ENCODE measurements at regions of chr2 and their contacts with region 1.

Region 1: DNA sequence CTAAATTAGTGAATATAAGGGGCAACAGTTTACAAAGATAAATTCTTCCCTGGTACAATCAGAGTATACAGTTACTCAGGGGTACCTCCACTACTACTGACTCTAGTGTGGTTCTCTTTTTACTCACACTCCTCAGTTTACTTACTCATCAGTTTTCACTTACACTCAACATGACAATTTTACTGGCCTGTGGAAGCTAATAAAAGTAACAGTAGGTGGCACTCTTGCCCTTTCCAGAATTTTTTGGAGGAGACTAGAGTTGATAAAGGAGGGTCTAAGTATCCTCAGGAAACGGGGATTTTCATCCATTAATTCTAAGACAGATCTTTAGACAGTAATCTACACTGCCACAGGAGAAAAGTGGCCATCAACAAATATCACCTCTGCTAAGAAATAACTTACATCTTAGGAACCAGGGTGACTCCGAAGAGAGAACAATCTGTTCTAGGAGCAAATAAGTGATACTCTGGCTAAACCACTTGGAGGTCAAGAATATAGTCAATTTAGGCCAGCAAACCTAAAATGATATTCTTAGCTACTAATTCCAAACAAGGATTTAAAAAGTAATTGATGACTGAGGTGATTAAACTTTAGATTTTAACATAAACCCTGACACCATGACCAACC is 61.3 kb downstream of the ATL2 start:
- DNase-seq: no peak
- ATAC-seq: peak; percentile 60
- H3K4me3 ChIP-seq: no peak overlapping the region
- H3K27ac ChIP-seq: no peak overlapping the region
- H3K4me1 ChIP-seq: no peaks in the 10 kb centered on the region
- H3K27me3 ChIP-seq: no peaks in the 10 kb centered on the region

Region 2: DNA sequence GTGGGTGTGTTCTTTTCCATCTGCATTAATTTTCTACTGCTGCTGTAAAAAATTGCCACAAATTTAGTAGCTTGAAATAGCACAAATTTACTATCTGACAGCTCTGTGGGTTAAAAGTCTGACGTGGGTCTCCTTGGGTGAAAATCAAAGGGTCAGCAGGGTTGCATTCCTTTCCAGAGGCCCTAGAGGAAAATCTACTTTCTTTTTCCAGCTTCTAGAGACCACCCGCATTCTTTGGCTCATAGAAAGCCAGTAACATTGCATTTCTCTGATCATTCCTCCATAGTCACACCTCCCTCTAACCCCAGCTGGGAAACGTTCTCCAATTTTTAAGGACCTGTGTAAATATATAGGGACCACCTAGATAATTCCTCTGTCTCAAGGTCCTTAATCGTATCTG is 67.6 kb before region 1 on chr2:
- intact Hi-C with region 1: no loop called
- DNase-seq: no peak
- ATAC-seq: no peak
- H3K4me3 ChIP-seq: no peak overlapping the region
- H3K27ac ChIP-seq: no peak overlapping the region
- H3K4me1 ChIP-seq: no peaks in the 10 kb centered on the region
- H3K27me3 ChIP-seq: no peaks in the 10 kb centered on the region

Region 3: DNA sequence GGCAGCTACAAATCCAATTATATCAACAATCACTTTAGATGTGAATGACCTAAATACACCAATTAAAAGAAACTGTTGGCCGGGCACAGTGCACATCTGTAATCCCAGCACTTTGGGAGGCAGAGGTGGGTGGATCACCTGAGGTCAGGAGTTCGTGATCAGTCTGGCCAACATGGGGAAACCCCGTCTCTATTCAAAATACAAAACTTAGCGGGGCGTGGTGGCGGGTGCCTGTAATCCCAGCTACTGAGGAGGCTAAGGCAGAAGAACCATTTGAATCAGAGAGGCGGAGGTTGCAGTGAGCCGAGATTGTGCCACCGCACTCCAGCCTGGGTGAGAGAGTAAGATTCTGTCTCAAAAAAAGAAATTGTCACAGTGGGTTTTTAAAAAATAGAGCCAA is 11.8 kb after region 1 on chr2:
- intact Hi-C with region 1: no loop called
- DNase-seq: no peak
- ATAC-seq: no peak
- H3K4me3 ChIP-seq: no peak overlapping the region
- H3K27ac ChIP-seq: no peak overlapping the region
- H3K4me1 ChIP-seq: peaks cover 0 to 1% of the 10 kb centered on the region in 2 donors
- H3K27me3 ChIP-seq: no peaks in the 10 kb centered on the region

Region 4: DNA sequence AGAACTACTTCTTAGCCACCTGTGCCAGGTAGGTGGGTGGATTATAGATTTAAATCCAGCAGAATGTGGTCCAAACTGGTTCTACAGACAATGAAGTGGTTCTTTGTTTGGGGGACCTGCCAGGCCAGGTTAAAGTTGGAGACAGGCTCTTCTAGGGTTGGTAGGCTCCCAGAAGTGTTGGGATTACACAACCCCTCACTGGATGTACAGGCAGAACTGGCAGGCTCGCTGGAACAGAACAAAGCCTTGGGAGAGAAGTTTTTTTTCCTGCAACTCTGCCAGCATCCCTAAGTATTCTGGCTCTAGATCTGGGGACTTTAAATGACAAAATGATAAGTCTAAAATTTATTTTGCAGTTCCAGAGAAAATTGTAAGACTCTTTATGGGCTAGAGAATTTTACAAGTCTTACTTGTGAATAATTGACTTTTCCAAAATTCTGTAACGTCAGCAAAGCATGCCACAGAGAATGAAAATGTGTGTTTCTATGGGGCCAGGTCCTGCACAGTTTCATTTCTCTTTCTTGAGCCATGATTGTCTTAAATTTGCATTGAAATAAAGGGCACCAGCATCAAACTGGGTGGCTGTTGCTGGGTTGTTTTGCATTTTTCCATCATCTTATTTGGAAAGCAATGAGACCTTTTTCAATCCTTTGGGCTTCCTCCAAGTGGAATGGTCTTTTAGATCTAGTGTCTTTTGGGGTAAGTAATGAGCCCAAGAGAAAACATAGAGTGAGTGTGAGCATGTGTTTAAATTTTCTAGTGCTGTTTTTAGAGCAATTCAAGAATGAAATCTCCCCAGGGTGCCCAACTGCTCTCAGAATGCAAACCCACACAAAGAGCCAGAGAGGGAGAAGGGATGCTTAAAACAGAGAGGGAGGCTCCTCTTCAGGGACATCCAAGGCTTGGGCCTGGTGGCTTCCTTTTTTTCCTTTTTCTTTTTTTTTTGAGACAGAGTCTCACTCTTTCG is 93.6 kb after region 1 on chr2:
- intact Hi-C with region 1: no loop called
- DNase-seq: no peak
- ATAC-seq: peak; percentile 81
- H3K4me3 ChIP-seq: no peak overlapping the region
- H3K27ac ChIP-seq: no peak overlapping the region
- H3K4me1 ChIP-seq: peaks cover 0 to 3% of the 10 kb centered on the region in 2 donors
- H3K27me3 ChIP-seq: no peaks in the 10 kb centered on the region

Region 5: GRCh38 chr2:38535744-38536506 is 220.1 kb after region 1 on chr2:
- intact Hi-C with region 1: loop called (anchors 2 to 10 kb)
- DNase-seq: peak; percentile 90 to 96
- ATAC-seq: peak; percentile 95
- H3K4me3 ChIP-seq: peak overlapping the region in 1 of 2 donors; percentile 17
- H3K27ac ChIP-seq: no peak overlapping the region
- H3K4me1 ChIP-seq: no peaks in the 10 kb centered on the region
- H3K27me3 ChIP-seq: no peaks in the 10 kb centered on the region

Region 6: GRCh38 chr2:38572167-38572566 is 256.3 kb after region 1 on chr2:
- intact Hi-C with region 1: loop called in 1 of 2 experiments (anchors 10 kb)
- DNase-seq: no peak
- ATAC-seq: no peak
- H3K4me3 ChIP-seq: no peak overlapping the region
- H3K27ac ChIP-seq: no peak overlapping the region
- H3K4me1 ChIP-seq: no peaks in the 10 kb centered on the region
- H3K27me3 ChIP-seq: no peaks in the 10 kb centered on the region

Region 7: DNA sequence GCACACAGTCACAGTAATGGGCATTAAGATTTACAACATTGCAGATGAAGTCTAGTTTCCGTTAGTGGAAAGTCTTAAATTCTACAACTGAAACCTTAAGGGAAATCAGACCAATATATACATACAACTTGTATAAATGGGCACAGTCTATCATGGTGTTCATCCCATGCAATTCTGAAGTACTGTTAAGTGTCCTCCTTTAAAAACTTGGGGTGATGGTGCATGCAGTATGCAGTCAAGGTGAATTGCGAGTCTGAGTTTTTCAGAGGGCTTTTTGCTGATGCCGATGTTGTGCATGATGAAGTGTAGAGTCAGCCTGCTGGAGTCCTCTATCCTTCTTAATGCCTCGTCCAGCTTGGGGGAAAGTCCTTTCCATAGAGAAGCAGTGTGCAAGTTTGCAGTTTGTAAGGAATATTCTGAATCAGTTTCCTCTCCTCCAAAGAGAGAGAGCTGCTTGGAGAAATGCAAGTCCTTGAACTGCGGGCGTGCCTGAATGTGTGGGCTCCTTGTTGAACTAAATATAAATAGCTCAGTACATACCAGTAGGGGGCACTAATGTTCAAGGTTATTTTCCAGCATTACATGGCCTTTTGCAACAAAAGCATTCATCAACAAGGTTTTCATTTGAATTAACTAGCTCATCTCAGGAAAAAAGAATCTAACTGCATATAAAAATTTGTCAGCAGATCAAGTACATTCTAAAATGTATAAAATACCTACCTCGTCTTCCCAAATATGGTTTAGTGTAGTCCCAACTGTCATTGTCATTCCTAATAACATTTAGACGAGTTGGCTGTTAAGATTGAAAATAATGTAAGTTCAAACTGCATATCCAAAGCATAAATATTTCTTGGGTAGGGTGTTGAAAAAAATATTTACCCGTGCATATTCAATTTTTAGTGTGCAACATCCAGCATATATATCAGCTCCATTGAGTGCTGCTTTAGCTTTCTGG is 265.6 kb after region 1 on chr2:
- intact Hi-C with region 1: loop called (anchors 10 kb)
- DNase-seq: no peak
- ATAC-seq: peak; percentile 82
- H3K4me3 ChIP-seq: no peak overlapping the region
- H3K27ac ChIP-seq: no peak overlapping the region
- H3K4me1 ChIP-seq: peaks cover 2 to 3% of the 10 kb centered on the region in 2 donors
- H3K27me3 ChIP-seq: no peaks in the 10 kb centered on the region

Region 8: DNA sequence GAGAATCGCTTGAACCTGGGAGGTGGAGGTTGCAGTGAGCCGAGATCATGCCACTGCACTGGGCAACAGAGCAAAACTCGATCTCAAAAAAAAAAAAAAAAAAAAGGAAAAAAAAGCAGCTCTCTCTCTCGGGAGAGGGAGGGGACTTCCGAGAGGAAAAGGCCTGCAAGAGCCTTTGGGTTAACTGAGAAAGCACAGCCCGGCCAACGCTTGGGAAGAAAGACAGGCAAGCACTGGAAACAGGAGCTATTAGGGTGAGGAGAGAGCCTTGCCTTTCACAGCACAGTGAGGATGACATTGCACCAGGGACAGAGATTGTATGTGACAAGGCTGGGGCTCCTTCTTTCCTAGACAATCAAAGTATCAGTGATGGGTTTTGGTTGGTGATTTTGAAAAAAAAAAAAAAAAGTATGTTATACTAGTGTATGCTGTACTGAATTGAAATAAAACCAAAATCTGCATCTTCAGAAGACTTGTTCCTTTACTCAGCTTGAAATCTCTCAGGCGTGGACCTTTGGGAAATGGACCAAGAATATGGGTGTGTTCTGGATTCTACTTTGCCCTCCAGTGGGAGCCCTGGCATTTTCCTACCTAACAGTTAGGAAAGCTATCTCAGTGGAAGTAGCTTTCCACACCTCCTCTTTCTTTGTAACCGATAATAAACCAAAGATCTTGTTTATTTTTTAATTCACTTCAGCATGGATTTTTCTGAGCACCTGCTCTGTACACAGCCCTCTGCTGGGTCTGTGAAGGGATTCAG is 418.7 kb after region 1 on chr2:
- intact Hi-C with region 1: loop called in 1 of 2 experiments (anchors 5 kb)
- DNase-seq: no peak
- ATAC-seq: no peak
- H3K4me3 ChIP-seq: no peak overlapping the region
- H3K27ac ChIP-seq: no peak overlapping the region
- H3K4me1 ChIP-seq: no peaks in the 10 kb centered on the region
- H3K27me3 ChIP-seq: no peaks in the 10 kb centered on the region

Measured in aorta (tissue), 5 donors.